Naive thymus-derived CD4-positive, alpha-beta T cell (primary cell): ENCODE measurements at regions of chr10 and their contacts with region 1.

Region 1: GRCh38 chr10:69392481-69393000 is 24.2 kb downstream of the TACR2 start:
- DNase-seq: peak; percentile 57 to 85 (median 81)
- ATAC-seq: peak; percentile 99
- H3K4me3 ChIP-seq: no peak overlapping the region
- H3K4me3 Mint-ChIP-seq: no peak overlapping the region
- H3K27ac ChIP-seq: peak overlapping the region; percentile 44
- H3K27ac Mint-ChIP-seq: peak overlapping the region; percentile 56 to 93 (median 84)
- H3K4me1 ChIP-seq: peaks cover 4 to 6% of the 10 kb centered on the region in 2 donors
- H3K4me1 Mint-ChIP-seq: peaks cover 8 to 35% (median 20%) of the 10 kb centered on the region in 7 donors
- H3K27me3 ChIP-seq: no peaks in the 10 kb centered on the region
- H3K27me3 Mint-ChIP-seq: no peaks in the 10 kb centered on the region

Region 2: GRCh38 chr10:69004821-69005220 is 387.7 kb before region 1 on chr10:
- CTCF ChIA-PET with region 1: interaction called, 5 read pairs
- POLR2A ChIA-PET with region 1: no interaction called
- intact Hi-C with region 1: loop called (anchors 1 to 5 kb)
- DNase-seq: peak in 7 of 9 donors; percentile 42 to 72 (median 60)
- ATAC-seq: peak; percentile 74
- H3K4me3 ChIP-seq: no peak overlapping the region
- H3K4me3 Mint-ChIP-seq: no peak overlapping the region
- H3K27ac ChIP-seq: no peak overlapping the region
- H3K27ac Mint-ChIP-seq: peak overlapping the region in 4 of 9 donors; percentile 23 to 43 (median 28)
- H3K4me1 ChIP-seq: peaks cover 0 to 3% of the 10 kb centered on the region in 2 donors
- H3K4me1 Mint-ChIP-seq: peaks cover 0 to 11% (median 5%) of the 10 kb centered on the region in 7 donors
- H3K27me3 ChIP-seq: no peaks in the 10 kb centered on the region
- H3K27me3 Mint-ChIP-seq: no peaks in the 10 kb centered on the region

Region 3: GRCh38 chr10:69232252-69232651 is 160.3 kb before region 1 on chr10:
- CTCF ChIA-PET with region 1: interaction called, 45 read pairs
- POLR2A ChIA-PET with region 1: interaction called, 6 read pairs
- intact Hi-C with region 1: loop called (anchors 1 kb)
- DNase-seq: peak in 1 of 9 donors; percentile 16
- ATAC-seq: no peak
- H3K4me3 ChIP-seq: no peak overlapping the region
- H3K4me3 Mint-ChIP-seq: peak overlapping the region in 8 of 10 donors; percentile 77 to 90 (median 84)
- H3K27ac ChIP-seq: no peak overlapping the region
- H3K27ac Mint-ChIP-seq: peak overlapping the region in 7 of 9 donors; percentile 83 to 98 (median 93)
- H3K4me1 ChIP-seq: peaks cover 27 to 40% of the 10 kb centered on the region in 2 donors
- H3K4me1 Mint-ChIP-seq: peaks cover 26 to 68% (median 56%) of the 10 kb centered on the region in 7 donors
- H3K27me3 ChIP-seq: no peaks in the 10 kb centered on the region
- H3K27me3 Mint-ChIP-seq: no peaks in the 10 kb centered on the region

Region 4: DNA sequence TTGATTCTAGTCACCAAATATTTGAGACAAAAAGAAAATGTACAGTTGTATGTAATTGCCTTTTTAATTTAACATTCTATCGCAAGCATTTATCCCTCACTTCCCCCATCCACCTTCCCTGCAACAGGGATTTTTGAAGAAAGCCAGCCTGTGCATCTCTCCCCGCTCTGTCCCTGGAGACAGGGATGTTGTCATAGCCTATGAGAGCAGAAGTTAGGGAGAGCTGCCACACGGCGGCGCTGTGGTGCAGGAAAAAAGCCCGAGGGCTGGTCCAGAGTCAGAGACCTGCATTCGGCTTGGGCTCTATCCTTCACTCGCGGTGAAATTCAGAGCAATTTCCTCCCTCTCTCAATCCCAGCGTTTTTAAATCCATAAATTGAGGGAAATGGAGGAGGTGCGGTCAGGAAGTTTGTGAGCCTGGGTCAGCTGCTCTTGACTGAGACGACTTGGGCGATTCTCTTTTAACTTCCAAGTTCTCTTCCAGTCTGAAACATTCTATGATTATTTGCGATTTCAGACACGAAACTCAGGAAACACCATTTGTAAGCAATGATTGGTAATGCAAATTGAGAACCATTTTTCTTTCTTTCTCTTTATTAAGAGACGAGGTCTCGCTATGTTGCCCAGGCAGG is 154.9 kb before region 1 on chr10:
- CTCF ChIA-PET with region 1: interaction called, 54 read pairs
- POLR2A ChIA-PET with region 1: interaction called, 7 read pairs
- intact Hi-C with region 1: loop called (anchors 1 kb)
- DNase-seq: peak; percentile 67 to 88 (median 79)
- ATAC-seq: peak; percentile 93
- H3K4me3 ChIP-seq: no peak overlapping the region
- H3K4me3 Mint-ChIP-seq: peak overlapping the region in 4 of 10 donors; percentile 9 to 36 (median 10)
- H3K27ac ChIP-seq: no peak overlapping the region
- H3K27ac Mint-ChIP-seq: peak overlapping the region in 6 of 9 donors; percentile 2 to 78 (median 20)
- H3K4me1 ChIP-seq: peaks cover 4 to 6% of the 10 kb centered on the region in 2 donors
- H3K4me1 Mint-ChIP-seq: peaks cover 8 to 37% (median 23%) of the 10 kb centered on the region in 7 donors
- H3K27me3 ChIP-seq: no peaks in the 10 kb centered on the region
- H3K27me3 Mint-ChIP-seq: no peaks in the 10 kb centered on the region

Region 5: GRCh38 chr10:69360485-69361324 is 31.8 kb before region 1 on chr10:
- CTCF ChIA-PET with region 1: interaction called, 3 read pairs
- POLR2A ChIA-PET with region 1: no interaction called
- intact Hi-C with region 1: loop called in 1 of 2 experiments (anchors 2 kb)
- DNase-seq: no peak
- ATAC-seq: no peak
- H3K4me3 ChIP-seq: no peak overlapping the region
- H3K4me3 Mint-ChIP-seq: peak overlapping the region in 9 of 10 donors; percentile 21 to 83 (median 73)
- H3K27ac ChIP-seq: peak overlapping the region; percentile 57
- H3K27ac Mint-ChIP-seq: peak overlapping the region; percentile 83 to 98 (median 94)
- H3K4me1 ChIP-seq: peaks cover 12 to 48% of the 10 kb centered on the region in 2 donors
- H3K4me1 Mint-ChIP-seq: peaks cover 44 to 77% (median 64%) of the 10 kb centered on the region in 7 donors
- H3K27me3 ChIP-seq: no peaks in the 10 kb centered on the region
- H3K27me3 Mint-ChIP-seq: no peaks in the 10 kb centered on the region